Dendritic cell treated with granulocyte-macrophage colony-stimulating factor and Interleukin-4, amounts not matched to agents 40 ng/mL and 50 ng/mL, for 4 days (primary cell): ENCODE measurements at regions of chr15 and their contacts with region 1.

Region 1: DNA sequence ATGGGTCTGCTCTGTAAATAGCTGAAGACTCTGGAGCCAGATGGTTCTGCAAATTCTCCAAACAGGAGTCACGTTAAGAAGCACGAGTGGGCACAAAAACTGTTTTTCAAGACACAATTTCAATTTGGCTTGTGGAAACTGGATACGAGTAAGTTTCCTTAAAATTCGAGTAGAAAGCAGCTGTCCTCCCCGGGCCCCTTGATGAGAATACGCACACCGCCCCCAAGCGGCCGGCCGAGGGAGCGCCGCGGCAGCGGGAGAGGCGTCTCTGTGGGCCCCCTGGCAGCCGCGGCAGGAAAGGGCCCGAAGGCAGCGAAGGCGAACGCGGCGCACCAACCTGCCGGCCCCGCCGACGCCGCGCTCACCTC is 778 bp upstream of the THBS1 start:
- H3K4me3 Mint-ChIP-seq: peak overlapping the region; percentile 72
- H3K27ac Mint-ChIP-seq: no peak overlapping the region
- H3K4me1 Mint-ChIP-seq: peaks cover 23% of the 10 kb centered on the region
- H3K27me3 Mint-ChIP-seq: peaks cover 43% of the 10 kb centered on the region

Region 2: DNA sequence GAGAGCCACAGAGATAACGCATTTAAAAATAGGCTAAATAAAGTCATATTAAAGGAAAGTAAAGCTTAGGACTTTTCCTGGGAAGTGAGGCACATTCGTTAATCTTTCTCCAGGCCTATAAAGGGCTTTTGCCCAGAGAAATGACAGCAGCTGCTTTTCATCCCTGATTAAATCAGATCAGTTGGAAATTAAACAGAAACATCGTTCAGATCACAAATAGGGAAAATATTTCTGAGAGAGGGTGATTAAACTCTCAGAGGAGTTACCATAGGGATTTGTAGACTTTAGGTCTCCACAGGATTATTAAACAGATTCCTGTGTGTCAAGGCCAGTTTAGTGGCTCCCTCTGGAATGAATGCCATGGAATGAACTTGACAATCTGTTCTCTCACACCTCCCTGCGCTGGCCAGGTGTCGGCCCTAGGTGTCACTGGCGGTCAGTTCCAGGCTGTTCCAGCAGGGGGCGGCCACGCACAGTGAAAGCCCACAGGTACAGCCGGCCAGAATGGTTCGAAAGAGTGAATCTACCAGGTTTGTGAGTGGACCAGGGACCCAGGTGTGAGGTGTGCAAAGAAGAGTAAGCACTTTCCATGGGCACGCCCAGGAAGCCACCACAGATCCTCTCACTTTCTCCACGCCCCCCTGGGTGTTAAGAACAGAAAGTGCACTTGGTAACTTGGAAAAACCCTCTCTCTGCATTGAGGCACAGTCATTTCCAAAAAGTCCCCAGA is 762.5 kb before region 1 on chr15:
- intact Hi-C with region 1: loop called (anchors 2 kb)
- H3K4me3 Mint-ChIP-seq: peak overlapping the region; percentile 30
- H3K27ac Mint-ChIP-seq: no peak overlapping the region
- H3K4me1 Mint-ChIP-seq: peaks cover 4% of the 10 kb centered on the region
- H3K27me3 Mint-ChIP-seq: peaks cover 5% of the 10 kb centered on the region

Region 3: GRCh38 chr15:39171944-39172368 is 408.1 kb before region 1 on chr15:
- intact Hi-C with region 1: loop called (anchors 1 kb)
- H3K4me3 Mint-ChIP-seq: no peak overlapping the region
- H3K27ac Mint-ChIP-seq: no peak overlapping the region
- H3K4me1 Mint-ChIP-seq: peaks cover 8% of the 10 kb centered on the region
- H3K27me3 Mint-ChIP-seq: peaks cover 3% of the 10 kb centered on the region

Region 4: DNA sequence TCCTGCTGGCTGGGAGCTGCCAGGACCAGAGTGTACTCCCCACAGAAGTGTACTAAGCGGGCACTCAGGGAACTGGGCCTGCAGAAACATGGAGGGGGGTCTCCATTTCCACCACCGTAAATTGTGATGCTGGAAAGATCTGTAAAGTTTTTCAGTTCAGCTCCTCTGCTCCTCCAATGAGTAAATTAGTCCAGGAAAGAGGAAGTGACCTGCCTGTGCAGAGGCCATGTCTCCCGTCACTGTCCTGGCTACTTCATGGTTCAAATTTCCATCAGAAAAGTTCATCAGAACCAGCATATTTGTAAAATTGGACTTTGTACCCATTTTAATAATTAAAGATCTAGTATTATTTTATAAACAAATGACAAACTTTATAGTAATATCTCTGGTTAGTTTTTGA is 225.9 kb before region 1 on chr15:
- intact Hi-C with region 1: loop called (anchors 1 kb)
- H3K4me3 Mint-ChIP-seq: no peak overlapping the region
- H3K27ac Mint-ChIP-seq: no peak overlapping the region
- H3K4me1 Mint-ChIP-seq: peaks cover 8% of the 10 kb centered on the region
- H3K27me3 Mint-ChIP-seq: no peaks in the 10 kb centered on the region

Region 5: DNA sequence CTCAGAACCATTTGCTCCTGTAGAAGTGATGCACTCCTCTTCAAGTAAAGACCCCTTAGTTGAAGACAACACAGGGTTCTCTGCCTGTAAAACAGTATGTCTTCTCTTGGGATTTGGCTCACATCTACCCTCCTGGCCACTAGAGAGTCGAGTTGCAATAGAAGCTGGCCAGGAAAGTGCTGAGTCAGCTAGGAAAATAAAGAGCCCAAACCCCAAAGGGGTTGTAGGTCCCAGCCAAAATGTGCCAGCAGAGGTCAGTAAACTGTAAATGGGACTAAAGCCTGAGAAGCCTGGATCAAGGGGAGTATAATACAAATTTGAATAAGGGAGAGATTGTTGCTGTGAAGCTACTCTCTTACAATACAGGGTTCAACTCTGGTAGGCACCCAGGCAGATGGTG is 36.5 kb before region 1 on chr15:
- intact Hi-C with region 1: no loop called
- H3K4me3 Mint-ChIP-seq: no peak overlapping the region
- H3K27ac Mint-ChIP-seq: no peak overlapping the region
- H3K4me1 Mint-ChIP-seq: peaks cover 8% of the 10 kb centered on the region
- H3K27me3 Mint-ChIP-seq: no peaks in the 10 kb centered on the region

Region 6: GRCh38 chr15:39699516-39700374 is 119.6 kb after region 1 on chr15:
- intact Hi-C with region 1: no loop called
- H3K4me3 Mint-ChIP-seq: no peak overlapping the region
- H3K27ac Mint-ChIP-seq: no peak overlapping the region
- H3K4me1 Mint-ChIP-seq: no peaks in the 10 kb centered on the region
- H3K27me3 Mint-ChIP-seq: no peaks in the 10 kb centered on the region